ENCODE measurements at regions of chr7 and their contacts with region 1.

Region 1: DNA sequence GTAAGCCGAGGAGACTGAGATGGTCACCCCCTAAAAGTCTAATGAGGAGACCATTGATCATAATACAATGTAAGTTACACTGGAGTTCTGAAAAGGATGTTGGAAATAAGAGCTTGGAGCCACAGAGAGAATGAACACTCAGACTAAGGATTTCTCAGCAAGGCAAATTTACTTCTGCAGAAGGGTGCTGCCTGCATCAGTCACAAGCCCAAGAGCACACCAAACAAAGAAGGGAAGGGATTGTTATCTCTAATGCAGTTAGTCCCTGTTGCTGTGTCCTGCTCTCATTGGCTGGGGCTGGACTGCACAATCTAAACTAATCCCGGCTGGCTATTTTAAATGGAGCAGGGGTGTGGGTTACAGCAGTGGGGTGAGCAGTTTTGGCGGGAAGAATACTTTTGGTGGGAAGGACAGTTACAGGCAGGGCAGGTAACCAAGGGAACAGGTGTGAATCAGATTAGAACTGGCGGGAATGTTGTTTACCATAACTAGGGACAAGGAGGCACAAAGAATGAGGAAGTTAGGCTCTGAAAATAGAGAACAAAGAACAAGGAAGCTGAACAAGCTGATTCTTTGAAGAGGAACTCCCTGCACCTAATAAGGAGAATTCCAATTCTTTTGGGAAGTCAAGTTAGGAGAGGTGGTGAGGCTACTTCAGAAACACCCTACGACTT is 30.3 kb upstream of the TRIM24 start:
- DNase-seq: no peak
- ATAC-seq: no peak
- H3K4me3 ChIP-seq: no peak overlapping the region
- H3K27ac ChIP-seq: no peak overlapping the region
- H3K4me1 ChIP-seq: no peaks in the 10 kb centered on the region
- H3K27me3 ChIP-seq: no peaks in the 10 kb centered on the region
- CTCF ChIP-seq: no peak
- EP300 ChIP-seq: no peak
- POLR2A ChIP-seq: no peak
- RAD21 ChIP-seq: no peak

Region 2: DNA sequence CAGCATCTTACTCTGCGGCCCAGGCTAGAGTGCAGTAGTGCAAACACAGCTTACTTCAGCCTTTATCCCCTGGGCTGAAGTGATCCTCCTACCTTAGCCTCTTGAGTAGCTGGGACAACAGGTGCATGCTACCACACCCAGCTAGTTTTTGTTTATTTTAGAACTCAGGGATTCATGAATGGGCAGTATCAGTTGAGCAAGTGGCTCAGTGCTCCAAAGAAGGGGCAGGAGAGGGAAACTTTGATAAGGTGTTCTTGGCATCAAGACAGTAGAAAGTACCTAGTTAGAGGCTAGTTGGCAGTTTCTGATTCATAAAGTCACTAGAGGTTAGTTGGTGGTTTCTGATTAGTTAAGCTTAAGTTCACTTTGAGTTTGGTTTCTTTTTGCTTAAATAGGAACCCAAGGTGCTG is 48.8 kb after region 1 on chr7:
- CTCF ChIA-PET with region 1: no interaction called
- POLR2A ChIA-PET with region 1: no interaction called
- in situ Hi-C with region 1: no loop called
- intact Hi-C with region 1: no loop called
- DNase-seq: no peak
- ATAC-seq: no peak; the same call in 2 of the 3 replicates
- H3K4me3 ChIP-seq: no peak overlapping the region
- H3K27ac ChIP-seq: peak overlapping the region; percentile 64
- H3K4me1 ChIP-seq: peaks cover 99% of the 10 kb centered on the region
- H3K27me3 ChIP-seq: no peaks in the 10 kb centered on the region
- CTCF ChIP-seq: no peak
- EP300 ChIP-seq: no peak
- POLR2A ChIP-seq: no peak
- RAD21 ChIP-seq: no peak

Region 3: DNA sequence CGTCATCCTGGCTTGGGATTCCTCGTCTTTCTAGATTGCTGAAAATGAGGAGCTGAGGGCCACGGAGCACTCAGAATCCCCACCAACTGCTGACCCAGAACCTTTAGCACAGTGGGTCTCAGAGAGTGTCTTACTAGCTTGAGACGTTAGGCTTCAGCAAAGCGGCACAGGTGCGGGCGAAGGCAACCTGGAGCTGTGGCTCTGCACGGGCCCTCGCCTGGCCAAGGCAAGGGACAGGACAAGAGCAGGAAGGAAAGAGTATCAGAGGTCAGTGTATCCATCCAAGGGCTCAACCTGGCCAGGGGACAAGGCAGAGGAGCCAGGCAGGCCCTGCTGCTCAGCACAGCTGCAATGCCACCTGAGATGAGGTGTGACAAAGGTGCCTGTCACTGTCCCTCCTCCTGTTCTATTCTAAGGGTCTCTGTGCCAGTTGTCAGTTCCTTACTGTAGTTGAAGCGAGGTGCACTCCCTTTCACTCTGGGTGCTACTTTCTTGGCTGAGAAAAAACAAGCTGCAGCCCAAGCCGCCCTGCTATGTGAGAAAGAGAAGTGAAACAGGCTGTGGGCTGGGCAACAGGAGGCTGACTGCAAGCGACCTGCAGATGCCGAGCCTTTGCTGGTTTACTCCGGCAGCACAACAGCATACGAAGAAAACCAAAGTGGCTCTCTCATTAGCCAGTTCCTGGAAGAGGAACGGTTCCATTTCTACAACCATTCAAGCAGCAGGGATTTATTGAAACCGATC is 1780.3 kb after region 1 on chr7:
- CTCF ChIA-PET with region 1: no interaction called
- POLR2A ChIA-PET with region 1: no interaction called
- in situ Hi-C with region 1: no loop called
- intact Hi-C with region 1: loop called (anchors 10 kb)
- DNase-seq: no peak
- ATAC-seq: peak; percentile 37; the same call in 2 of the 3 replicates
- H3K4me3 ChIP-seq: no peak overlapping the region; a peak in 1 of 6 replicates
- H3K27ac ChIP-seq: no peak overlapping the region
- H3K4me1 ChIP-seq: peaks cover 72% of the 10 kb centered on the region
- H3K27me3 ChIP-seq: peaks cover 0 to 18% of the 10 kb centered on the region in 2 experiments; a peak in 4 of 5 replicates
- CTCF ChIP-seq: no peak
- EP300 ChIP-seq: no peak
- POLR2A ChIP-seq: no peak
- RAD21 ChIP-seq: no peak

Measured in HepG2 (cell line).